ENCODE measurements at regions of chr5 and their contacts with region 1.

Region 1: DNA sequence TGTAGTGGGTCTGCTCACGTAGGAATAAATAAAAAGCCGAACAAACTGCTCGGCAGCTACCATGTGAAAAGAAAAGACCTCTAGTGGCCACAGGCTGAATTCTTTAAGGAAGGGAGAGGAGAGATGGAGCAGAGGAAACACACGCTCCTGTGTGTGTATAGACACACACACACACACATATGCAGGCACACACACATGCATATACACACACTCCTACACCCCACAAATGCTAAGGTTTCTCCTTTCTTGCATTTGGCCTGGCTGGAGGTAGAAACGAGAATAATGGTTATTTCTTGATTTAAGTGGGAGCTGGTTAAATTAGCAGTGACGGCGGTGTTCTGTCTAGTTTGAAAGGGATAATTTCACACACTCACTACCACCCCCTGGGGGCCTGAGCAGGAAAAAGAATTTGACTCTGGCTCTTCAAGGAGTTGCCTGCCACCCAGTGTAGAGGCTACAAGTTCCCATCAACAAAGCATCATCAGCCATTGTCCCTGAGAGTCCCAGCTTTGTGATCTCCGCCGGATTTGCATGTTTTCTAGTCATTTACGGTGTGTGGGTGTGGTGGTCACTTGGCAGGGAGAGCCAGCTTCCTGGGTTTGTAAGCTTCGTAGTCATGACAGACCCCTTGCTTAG is at the start of gene INSYN2B:
- DNase-seq: peak; percentile 63
- H3K4me3 ChIP-seq: peak within 1 kb of the TSS; percentile 58 to 85
- H3K27ac ChIP-seq: peak within 1 kb of the TSS; percentile 32 to 92; a peak in 3 of 4 replicates
- H3K4me1 ChIP-seq: peaks cover 2 to 24% of the 10 kb centered on the region in 2 experiments; a peak in 3 of 4 replicates
- H3K27me3 ChIP-seq: no peaks in the 10 kb centered on the region
- CTCF ChIP-seq: peak; percentile 90
- EP300 ChIP-seq: no peak
- RAD21 ChIP-seq: peak; percentile 67
- polyA plus RNA-seq, gene INSYN2B: 9.2 and 13.4 TPM in 2 replicates

Region 2: DNA sequence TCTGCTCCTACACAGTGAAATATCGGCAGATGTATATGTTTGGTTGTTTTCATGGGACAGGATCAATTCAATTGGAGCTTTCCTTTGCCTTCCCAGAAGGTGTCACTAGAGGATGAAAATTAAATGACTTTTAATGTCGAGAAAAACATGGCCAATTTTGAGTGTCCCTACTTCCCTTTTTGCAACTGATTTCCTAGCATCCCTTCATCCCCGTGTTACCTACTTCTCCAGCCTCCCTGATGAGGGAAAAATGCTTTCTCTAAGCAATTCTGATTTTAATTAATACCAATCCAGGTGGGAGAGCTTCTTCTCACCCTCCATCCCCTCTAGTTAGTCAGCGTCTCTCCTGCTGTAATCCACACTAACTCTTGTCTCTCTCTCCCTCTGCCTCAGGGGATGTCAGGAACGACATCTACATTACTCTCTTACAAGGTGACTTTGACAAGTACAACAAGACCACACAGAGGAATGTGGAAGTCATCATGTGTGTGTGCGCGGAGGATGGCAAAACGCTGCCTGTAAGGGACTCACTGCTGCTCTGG is 278.6 kb before region 1 on chr5:
- CTCF ChIA-PET with region 1: interaction called, 13 read pairs
- POLR2A ChIA-PET with region 1: no interaction called
- DNase-seq: peak; percentile 37
- H3K4me3 ChIP-seq: no peak overlapping the region; a peak in 1 of 4 replicates
- H3K27ac ChIP-seq: peak overlapping the region in 1 of 2 experiments; percentile 6; a peak in 1 of 4 replicates
- H3K4me1 ChIP-seq: peaks cover 3 to 31% of the 10 kb centered on the region in 2 experiments; a peak in 3 of 4 replicates
- H3K27me3 ChIP-seq: no peaks in the 10 kb centered on the region
- CTCF ChIP-seq: peak; percentile 74
- EP300 ChIP-seq: no peak
- RAD21 ChIP-seq: peak; percentile 87

Region 3: GRCh38 chr5:169728418-169728817 is 252.1 kb before region 1 on chr5:
- CTCF ChIA-PET with region 1: interaction called, 14 read pairs
- POLR2A ChIA-PET with region 1: no interaction called
- DNase-seq: no peak
- H3K4me3 ChIP-seq: no peak overlapping the region
- H3K27ac ChIP-seq: no peak overlapping the region
- H3K4me1 ChIP-seq: no peaks in the 10 kb centered on the region
- H3K27me3 ChIP-seq: no peaks in the 10 kb centered on the region
- CTCF ChIP-seq: no peak
- EP300 ChIP-seq: no peak
- RAD21 ChIP-seq: no peak

Region 4: GRCh38 chr5:169906745-169907649 is 73.5 kb before region 1 on chr5:
- CTCF ChIA-PET with region 1: interaction called, 18 read pairs
- POLR2A ChIA-PET with region 1: no interaction called
- DNase-seq: no peak
- H3K4me3 ChIP-seq: no peak overlapping the region
- H3K27ac ChIP-seq: no peak overlapping the region
- H3K4me1 ChIP-seq: peaks cover 0 to 10% of the 10 kb centered on the region in 2 experiments; a peak in 2 of 4 replicates
- H3K27me3 ChIP-seq: no peaks in the 10 kb centered on the region
- CTCF ChIP-seq: no peak
- EP300 ChIP-seq: no peak
- RAD21 ChIP-seq: no peak

Region 5: DNA sequence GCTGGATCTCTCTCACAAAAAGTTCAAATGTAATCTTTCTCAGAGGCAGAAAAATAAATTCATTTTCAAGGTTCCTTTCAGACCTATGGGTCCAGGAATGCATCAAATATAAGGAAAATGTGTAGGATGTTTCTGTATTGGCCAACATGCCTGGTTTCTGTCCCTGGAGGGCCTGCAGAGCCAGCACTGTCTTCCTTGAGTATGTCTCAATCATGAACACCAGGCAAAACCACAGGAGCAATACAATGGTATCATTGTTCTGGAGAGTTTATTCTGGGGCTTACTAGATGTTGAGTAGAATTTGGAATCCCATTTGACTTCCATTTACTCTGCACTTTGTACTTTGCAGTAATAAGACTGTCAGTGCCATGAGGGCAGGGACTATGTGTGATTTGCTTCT is 23.8 kb before region 1 on chr5:
- CTCF ChIA-PET with region 1: interaction called, 20 read pairs
- POLR2A ChIA-PET with region 1: no interaction called
- DNase-seq: no peak
- H3K4me3 ChIP-seq: no peak overlapping the region
- H3K27ac ChIP-seq: no peak overlapping the region
- H3K4me1 ChIP-seq: no peaks in the 10 kb centered on the region
- H3K27me3 ChIP-seq: no peaks in the 10 kb centered on the region
- CTCF ChIP-seq: no peak
- EP300 ChIP-seq: no peak
- RAD21 ChIP-seq: no peak

Region 6: GRCh38 chr5:170034231-170034630 is 53.7 kb after region 1 on chr5:
- CTCF ChIA-PET with region 1: interaction called, 12 read pairs
- POLR2A ChIA-PET with region 1: no interaction called
- DNase-seq: no peak
- H3K4me3 ChIP-seq: no peak overlapping the region
- H3K27ac ChIP-seq: no peak overlapping the region
- H3K4me1 ChIP-seq: no peaks in the 10 kb centered on the region
- H3K27me3 ChIP-seq: no peaks in the 10 kb centered on the region
- CTCF ChIP-seq: no peak
- EP300 ChIP-seq: no peak
- RAD21 ChIP-seq: no peak

Region 7: DNA sequence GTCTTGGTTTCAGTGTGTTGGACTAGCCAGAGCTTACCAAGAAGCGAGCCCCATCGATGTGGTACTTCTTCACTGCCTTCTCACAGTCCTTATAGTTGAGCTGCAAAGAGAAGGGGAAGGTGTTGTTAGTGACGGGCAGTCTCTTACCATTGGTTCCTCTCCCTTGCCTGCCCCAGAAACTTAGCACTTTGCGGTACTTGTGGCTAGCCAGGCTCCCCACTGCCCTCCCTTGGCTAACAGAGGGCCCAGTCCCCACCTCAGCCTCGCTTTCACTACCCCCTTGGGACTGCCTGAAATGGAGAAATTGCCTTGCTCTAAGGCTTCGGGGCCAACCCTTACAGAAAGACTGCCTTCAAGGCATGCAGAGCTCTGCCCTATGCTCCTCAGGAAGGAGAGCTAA is 312.7 kb after region 1 on chr5:
- CTCF ChIA-PET with region 1: no interaction called
- POLR2A ChIA-PET with region 1: no interaction called
- DNase-seq: no peak
- H3K4me3 ChIP-seq: no peak overlapping the region
- H3K27ac ChIP-seq: no peak overlapping the region
- H3K4me1 ChIP-seq: no peaks in the 10 kb centered on the region
- H3K27me3 ChIP-seq: peaks cover 6% of the 10 kb centered on the region; the same call in 1 of the 2 replicates
- CTCF ChIP-seq: no peak
- EP300 ChIP-seq: no peak
- RAD21 ChIP-seq: no peak